HepG2 (cell line): ENCODE measurements at regions of chr19 and their contacts with region 1.

Region 1: GRCh38 chr19:16495982-16496612 is at the starts of genes C19orf44 and CALR3:
- DNase-seq: peak; percentile 96
- ATAC-seq: peak; percentile 96
- H3K4me3 ChIP-seq: peak within 1 kb of the TSS; percentile 79 to 86 (median 84)
- H3K27ac ChIP-seq: peak within 1 kb of the TSS; percentile 85
- H3K4me1 ChIP-seq: peaks cover 69% of the 10 kb centered on the region
- H3K27me3 ChIP-seq: no peaks in the 10 kb centered on the region
- CTCF ChIP-seq: peak; percentile 34
- EP300 ChIP-seq: peak in 1 of 2 experiments; percentile 3; a peak in 1 of 4 replicates
- POLR2A ChIP-seq: peak in 1 of 2 experiments; percentile 56; a peak in 3 of 4 replicates
- RAD21 ChIP-seq: peak; percentile 42; the same call in 1 of the 2 replicates
- total RNA-seq, gene C19orf44: 3.6 and 4.3 TPM in 2 replicates
- total RNA-seq, gene CALR3: not detected in 2 replicates

Region 2: GRCh38 chr19:16446724-16447368 is 49.3 kb before region 1 on chr19:
- CTCF ChIA-PET with region 1: no interaction called
- POLR2A ChIA-PET with region 1: no interaction called
- in situ Hi-C with region 1: no loop called
- intact Hi-C with region 1: loop called (anchors 10 kb)
- DNase-seq: peak; percentile 80
- ATAC-seq: peak; percentile 98
- H3K4me3 ChIP-seq: no peak overlapping the region
- H3K27ac ChIP-seq: peak overlapping the region; percentile 45
- H3K4me1 ChIP-seq: peaks cover 44% of the 10 kb centered on the region
- H3K27me3 ChIP-seq: no peaks in the 10 kb centered on the region
- CTCF ChIP-seq: 0 out of 2 replicates have a peak, but pooled peaks have one; percentile 3
- EP300 ChIP-seq: peak in 1 of 2 experiments; percentile 53; a peak in 1 of 4 replicates
- POLR2A ChIP-seq: no peak
- RAD21 ChIP-seq: no peak

Region 3: GRCh38 chr19:16463344-16464249 is 32.5 kb before region 1 on chr19:
- CTCF ChIA-PET with region 1: no interaction called
- POLR2A ChIA-PET with region 1: interaction called, 5 read pairs
- in situ Hi-C with region 1: no loop called
- intact Hi-C with region 1: loop called (anchors 2 kb)
- DNase-seq: peak; percentile 90
- ATAC-seq: peak; percentile 95
- H3K4me3 ChIP-seq: peak overlapping the region; percentile 20 to 66 (median 48); a peak in 5 of 6 replicates
- H3K27ac ChIP-seq: peak overlapping the region; percentile 72
- H3K4me1 ChIP-seq: peaks cover 86% of the 10 kb centered on the region
- H3K27me3 ChIP-seq: no peaks in the 10 kb centered on the region
- CTCF ChIP-seq: 0 out of 2 replicates have a peak, but pooled peaks have one; percentile 4
- EP300 ChIP-seq: no peak; a peak in 1 of 4 replicates
- POLR2A ChIP-seq: no peak; a peak in 1 of 4 replicates
- RAD21 ChIP-seq: no peak

Region 4: DNA sequence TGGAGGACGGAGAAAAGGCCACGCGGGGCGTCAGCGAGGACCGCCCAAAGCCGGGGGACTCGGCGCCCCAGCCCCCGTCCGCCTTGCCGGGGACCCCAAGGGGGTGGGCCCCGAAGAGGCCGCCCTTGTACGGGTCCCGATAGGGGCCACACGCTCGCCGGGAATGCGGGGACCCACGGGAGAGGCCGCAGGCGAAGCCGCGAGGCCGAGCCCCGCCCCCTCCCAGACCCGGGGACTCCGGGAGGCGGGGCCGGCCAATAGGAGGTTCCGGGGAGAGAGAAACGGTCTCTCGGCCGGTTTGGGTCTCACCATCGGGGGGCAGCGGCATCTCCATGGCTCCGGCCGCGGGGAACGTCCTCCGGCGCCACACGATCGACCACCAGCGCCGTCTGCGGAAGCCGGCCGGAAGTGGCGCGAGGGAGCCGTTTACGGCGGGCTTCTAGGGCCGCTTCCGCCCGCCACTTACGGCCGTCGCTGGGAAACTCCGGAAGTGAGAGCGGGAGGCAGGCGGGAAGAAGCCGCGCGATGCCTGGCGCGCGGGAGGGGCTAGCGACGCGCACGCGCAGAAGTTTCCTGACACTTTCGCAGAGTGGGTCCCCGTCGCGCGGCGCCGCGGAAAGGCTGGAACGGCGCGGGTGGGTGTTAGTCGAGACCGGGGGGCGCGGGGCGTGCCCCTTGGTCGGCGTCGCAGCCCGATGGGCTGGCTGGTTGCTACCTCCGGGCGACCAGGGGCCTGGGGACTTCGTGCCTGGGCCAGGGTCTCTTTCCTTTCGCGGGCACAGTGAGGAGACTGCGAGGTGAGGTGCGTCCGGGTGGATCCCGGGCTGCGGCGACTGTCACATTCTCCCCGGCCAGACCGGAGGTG is 46.2 kb after region 1 on chr19 and contains the start of gene CHERP:
- CTCF ChIA-PET with region 1: no interaction called
- POLR2A ChIA-PET with region 1: interaction called, 10 read pairs
- in situ Hi-C with region 1: no loop called
- intact Hi-C with region 1: no loop called
- DNase-seq: peak; percentile 87
- ATAC-seq: peak; percentile 81
- H3K4me3 ChIP-seq: peak within 1 kb of the TSS; percentile 86 to 99 (median 96)
- H3K27ac ChIP-seq: peak within 1 kb of the TSS; percentile 87
- H3K4me1 ChIP-seq: peaks cover 32% of the 10 kb centered on the region
- H3K27me3 ChIP-seq: no peaks in the 10 kb centered on the region; a peak in 1 of 5 replicates
- CTCF ChIP-seq: no peak; the same call in 1 of the 2 replicates
- EP300 ChIP-seq: no peak
- POLR2A ChIP-seq: peak; percentile 76 to 95
- RAD21 ChIP-seq: 0 out of 2 replicates have a peak, but pooled peaks have one; percentile 17
- total RNA-seq, gene CHERP: 4.3 and 9.1 TPM in 2 replicates